ENCODE measurements at regions of chr16 and their contacts with region 1.

Region 1: GRCh38 chr16:68085259-68086071 is at the start of gene NFATC3:
- DNase-seq: peak; percentile 99
- ATAC-seq: peak; percentile 68
- H3K4me3 Mint-ChIP-seq: peak within 1 kb of the TSS; percentile 88
- H3K27ac Mint-ChIP-seq: peak within 1 kb of the TSS; percentile 99
- H3K4me1 Mint-ChIP-seq: peaks cover 46% of the 10 kb centered on the region
- H3K27me3 Mint-ChIP-seq: no peaks in the 10 kb centered on the region
- CTCF ChIP-seq: no peak
- total RNA-seq, gene NFATC3: 102 to 104 TPM

Region 2: DNA sequence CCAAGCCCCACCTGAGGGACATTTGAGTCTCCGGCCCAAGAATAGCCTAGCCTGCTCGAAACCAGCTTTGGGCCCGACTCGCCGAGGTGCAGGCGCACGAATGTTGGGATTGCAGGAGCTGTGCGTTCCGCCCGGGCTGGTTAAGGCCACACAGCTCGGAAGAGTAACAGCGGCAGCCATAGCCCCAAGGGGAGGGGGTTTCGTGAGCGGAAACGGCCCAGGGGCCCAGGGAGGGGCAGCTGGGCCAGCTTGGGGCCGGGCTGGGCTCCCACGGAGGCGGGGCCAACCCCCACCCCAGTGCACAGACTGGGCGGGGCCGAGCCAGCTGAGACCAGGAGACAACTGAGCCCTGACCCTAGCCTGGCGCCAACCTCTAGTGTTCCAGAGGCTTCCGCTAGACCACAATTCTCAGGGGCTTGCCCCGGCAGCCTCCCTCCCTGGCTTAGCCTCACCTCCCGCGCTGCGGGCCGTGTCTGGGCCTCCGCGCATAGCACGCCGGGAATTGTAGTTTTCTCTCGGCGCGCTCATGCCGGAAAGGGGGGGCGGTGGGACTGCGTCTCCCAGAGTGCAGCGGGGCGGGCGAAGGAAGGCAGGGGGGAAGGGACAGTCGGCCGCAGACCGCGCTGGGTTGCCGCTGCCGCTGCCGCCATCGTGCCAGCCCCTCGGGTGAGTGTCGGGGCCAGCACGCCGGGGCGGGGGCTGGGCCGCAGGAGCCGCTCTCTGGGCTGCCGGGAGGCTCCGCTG is 239.0 kb before region 1 on chr16 and contains the start of gene NUTF2:
- CTCF ChIA-PET with region 1: no interaction called
- POLR2A ChIA-PET with region 1: no interaction called
- intact Hi-C with region 1: no loop called
- DNase-seq: peak; percentile 97
- ATAC-seq: peak; percentile 71
- H3K4me3 Mint-ChIP-seq: peak within 1 kb of the TSS; percentile 93
- H3K27ac Mint-ChIP-seq: peak within 1 kb of the TSS; percentile 94
- H3K4me1 Mint-ChIP-seq: peaks cover 41% of the 10 kb centered on the region
- H3K27me3 Mint-ChIP-seq: no peaks in the 10 kb centered on the region
- CTCF ChIP-seq: no peak
- total RNA-seq, gene NUTF2: 152 to 157 TPM

Region 3: GRCh38 chr16:68022704-68023522 is 62.6 kb before region 1 on chr16 and contains the starts of genes DDX28 and DUS2:
- CTCF ChIA-PET with region 1: no interaction called
- POLR2A ChIA-PET with region 1: interaction called, 10 read pairs
- intact Hi-C with region 1: no loop called
- DNase-seq: peak; percentile 95
- ATAC-seq: peak; percentile 93
- H3K4me3 Mint-ChIP-seq: peak within 1 kb of the TSS; percentile 87
- H3K27ac Mint-ChIP-seq: peak within 1 kb of the TSS; percentile 96
- H3K4me1 Mint-ChIP-seq: peaks cover 23% of the 10 kb centered on the region
- H3K27me3 Mint-ChIP-seq: no peaks in the 10 kb centered on the region
- CTCF ChIP-seq: no peak
- total RNA-seq, gene DDX28: 16.6 to 17.3 TPM
- total RNA-seq, gene DUS2: 34.2 to 35.1 TPM

Region 4: GRCh38 chr16:68064791-68065365 is 20.6 kb before region 1 on chr16:
- CTCF ChIA-PET with region 1: interaction called, 15 read pairs
- POLR2A ChIA-PET with region 1: interaction called, 16 read pairs
- intact Hi-C with region 1: no loop called
- DNase-seq: peak; percentile 85
- ATAC-seq: peak; percentile 73
- H3K4me3 Mint-ChIP-seq: no peak overlapping the region
- H3K27ac Mint-ChIP-seq: peak overlapping the region; percentile 79
- H3K4me1 Mint-ChIP-seq: peaks cover 59% of the 10 kb centered on the region
- H3K27me3 Mint-ChIP-seq: no peaks in the 10 kb centered on the region
- CTCF ChIP-seq: peak; percentile 90

Region 5: DNA sequence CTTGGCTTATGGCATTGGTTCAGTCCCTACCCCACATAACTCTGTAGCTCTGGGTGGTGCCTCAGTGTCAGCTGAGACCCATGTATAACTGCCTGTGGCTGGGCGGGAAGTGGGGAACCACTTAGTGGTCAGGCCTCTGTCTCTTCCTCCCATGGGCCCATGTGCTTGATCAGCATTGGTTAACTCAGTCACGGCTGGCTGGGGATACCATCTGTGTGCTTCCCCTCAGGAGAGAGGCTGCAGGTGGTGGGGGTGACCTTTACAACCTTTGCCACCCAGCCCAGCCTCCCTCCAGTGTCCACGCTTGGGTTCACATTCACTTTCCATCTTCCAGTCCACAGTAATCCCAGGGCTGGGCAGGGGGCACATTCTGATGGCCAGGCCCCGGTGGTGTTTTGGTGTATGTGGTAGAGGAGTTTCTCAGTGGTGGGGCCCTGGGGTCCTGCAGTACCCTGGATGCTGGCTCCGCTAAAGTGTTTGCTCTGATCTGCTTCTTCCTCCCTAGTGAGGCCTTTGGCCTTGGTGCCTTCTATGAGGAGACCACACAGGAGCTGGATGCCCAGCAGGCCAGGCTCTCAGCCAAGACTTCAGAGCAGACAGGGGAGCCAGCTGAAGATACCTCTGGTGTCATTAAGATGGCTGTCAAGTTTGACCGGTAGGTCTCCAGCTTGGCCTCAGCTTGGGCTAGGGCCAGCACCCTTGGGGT is 10.5 kb before region 1 on chr16:
- CTCF ChIA-PET with region 1: interaction called, 12 read pairs
- POLR2A ChIA-PET with region 1: interaction called, 34 read pairs
- intact Hi-C with region 1: no loop called
- DNase-seq: peak; percentile 95
- ATAC-seq: peak; percentile 60
- H3K4me3 Mint-ChIP-seq: peak overlapping the region; percentile 32
- H3K27ac Mint-ChIP-seq: peak overlapping the region; percentile 95
- H3K4me1 Mint-ChIP-seq: peaks cover 80% of the 10 kb centered on the region
- H3K27me3 Mint-ChIP-seq: no peaks in the 10 kb centered on the region
- CTCF ChIP-seq: no peak

Region 6: DNA sequence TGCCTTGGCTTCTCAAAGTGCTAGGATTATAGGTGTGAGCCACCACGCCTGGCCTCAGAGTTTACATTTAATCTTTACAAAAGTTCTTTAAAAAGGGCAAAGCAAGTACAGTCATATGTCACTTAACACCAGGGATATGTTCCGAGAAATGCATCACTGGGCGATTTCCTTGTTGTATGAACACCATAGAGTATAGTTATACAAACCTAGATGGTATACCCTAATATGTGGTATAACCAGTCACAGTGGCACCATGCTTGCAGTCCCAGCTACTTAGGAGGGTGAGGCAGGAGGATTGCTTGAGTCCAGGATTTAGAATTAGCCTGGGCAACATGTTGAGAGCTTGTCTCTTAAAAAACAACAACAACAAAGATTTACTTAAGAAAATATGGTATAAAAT is 51.0 kb after region 1 on chr16:
- CTCF ChIA-PET with region 1: no interaction called
- POLR2A ChIA-PET with region 1: no interaction called
- intact Hi-C with region 1: no loop called
- DNase-seq: peak; percentile 26
- ATAC-seq: peak; percentile 65
- H3K4me3 Mint-ChIP-seq: no peak overlapping the region
- H3K27ac Mint-ChIP-seq: peak overlapping the region; percentile 20
- H3K4me1 Mint-ChIP-seq: peaks cover 46% of the 10 kb centered on the region
- H3K27me3 Mint-ChIP-seq: no peaks in the 10 kb centered on the region
- CTCF ChIP-seq: no peak

Region 7: GRCh38 chr16:68229431-68230198 is 144.2 kb after region 1 on chr16:
- CTCF ChIA-PET with region 1: interaction called, 10 read pairs
- POLR2A ChIA-PET with region 1: interaction called, 10 read pairs
- intact Hi-C with region 1: loop called (anchors 2 kb)
- DNase-seq: peak; percentile 64
- ATAC-seq: no peak
- H3K4me3 Mint-ChIP-seq: no peak overlapping the region
- H3K27ac Mint-ChIP-seq: peak overlapping the region; percentile 75
- H3K4me1 Mint-ChIP-seq: peaks cover 50% of the 10 kb centered on the region
- H3K27me3 Mint-ChIP-seq: no peaks in the 10 kb centered on the region
- CTCF ChIP-seq: peak; percentile 88

Measured in activated CD8-positive, alpha-beta T cell treated with anti-CD3 and anti-CD28 coated beads for 36 hours (primary cell).